Activated CD8-positive, alpha-beta T cell treated with anti-CD3 and anti-CD28 coated beads, Interleukin-2, amount 10 ng/mL, durations not matched to agents 7 days and 5 days (primary cell): ENCODE measurements at regions of chr16 and their contacts with region 1.

Region 1: DNA sequence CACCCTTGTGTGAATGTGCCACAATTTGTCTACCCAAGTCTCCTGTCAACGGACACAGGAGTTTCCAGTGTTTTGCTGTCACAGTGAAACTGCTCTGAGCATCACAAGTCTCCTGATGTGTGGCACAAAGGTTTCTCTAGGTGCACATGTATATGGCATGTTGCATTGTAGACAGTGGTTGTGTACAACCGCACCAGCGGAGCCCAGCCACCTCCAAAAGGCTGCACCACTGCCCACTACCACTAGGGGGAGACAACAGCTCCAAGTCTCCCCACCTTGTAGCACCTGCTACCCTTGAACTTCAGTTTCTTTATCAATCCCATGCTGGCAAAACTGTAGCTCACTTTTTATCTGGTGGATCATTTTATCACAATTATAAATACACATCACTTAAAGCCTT is 95.5 kb upstream of the ZNF469 start:
- DNase-seq: peak; percentile 71
- ATAC-seq: peak; percentile 61
- H3K4me3 Mint-ChIP-seq: no peak overlapping the region
- H3K27ac Mint-ChIP-seq: no peak overlapping the region
- H3K4me1 Mint-ChIP-seq: no peaks in the 10 kb centered on the region
- H3K27me3 Mint-ChIP-seq: no peaks in the 10 kb centered on the region

Region 2: DNA sequence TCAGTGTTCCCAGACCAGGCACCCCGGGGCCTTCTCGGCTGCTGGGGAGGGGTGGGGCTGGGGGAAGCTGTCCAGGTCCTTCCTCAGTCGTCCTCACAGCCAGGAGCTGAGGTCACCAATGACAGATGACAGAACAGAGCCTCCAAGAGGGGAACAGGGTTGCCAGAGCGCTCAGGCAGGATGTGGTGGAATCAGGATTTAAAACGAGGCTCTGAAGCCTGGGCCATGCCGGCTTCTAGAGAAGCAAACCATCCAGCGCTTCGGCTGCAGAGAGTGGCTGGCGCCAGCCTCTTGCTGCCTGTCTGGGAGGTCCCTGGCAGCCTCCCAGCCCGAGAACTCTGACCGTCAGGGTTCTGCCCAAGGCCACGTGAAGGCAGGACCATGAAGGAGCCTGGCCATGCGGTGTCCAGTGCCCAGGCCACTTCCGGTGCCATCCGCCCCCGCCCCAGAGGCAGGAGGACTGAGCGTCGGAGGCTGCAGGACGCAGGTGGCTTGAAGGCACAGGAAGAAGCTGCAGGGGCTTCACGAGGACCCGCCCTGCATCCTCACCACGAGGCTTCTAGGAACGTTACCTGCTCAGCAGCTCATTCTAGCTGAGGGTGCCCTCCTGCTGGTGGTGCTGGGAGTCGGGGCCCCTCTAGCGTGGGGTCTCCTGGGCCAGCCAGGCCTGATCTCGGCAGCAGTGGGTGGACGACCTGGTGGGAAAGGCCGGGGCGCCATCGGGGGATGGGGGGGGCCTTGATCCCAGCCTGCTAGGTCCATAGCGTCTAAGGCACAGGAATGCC is 599.9 kb before region 1 on chr16:
- CTCF ChIA-PET with region 1: no interaction called
- POLR2A ChIA-PET with region 1: no interaction called
- DNase-seq: peak; percentile 31
- ATAC-seq: no peak
- H3K4me3 Mint-ChIP-seq: no peak overlapping the region
- H3K27ac Mint-ChIP-seq: no peak overlapping the region
- H3K4me1 Mint-ChIP-seq: peaks cover 1% of the 10 kb centered on the region
- H3K27me3 Mint-ChIP-seq: no peaks in the 10 kb centered on the region

Region 3: DNA sequence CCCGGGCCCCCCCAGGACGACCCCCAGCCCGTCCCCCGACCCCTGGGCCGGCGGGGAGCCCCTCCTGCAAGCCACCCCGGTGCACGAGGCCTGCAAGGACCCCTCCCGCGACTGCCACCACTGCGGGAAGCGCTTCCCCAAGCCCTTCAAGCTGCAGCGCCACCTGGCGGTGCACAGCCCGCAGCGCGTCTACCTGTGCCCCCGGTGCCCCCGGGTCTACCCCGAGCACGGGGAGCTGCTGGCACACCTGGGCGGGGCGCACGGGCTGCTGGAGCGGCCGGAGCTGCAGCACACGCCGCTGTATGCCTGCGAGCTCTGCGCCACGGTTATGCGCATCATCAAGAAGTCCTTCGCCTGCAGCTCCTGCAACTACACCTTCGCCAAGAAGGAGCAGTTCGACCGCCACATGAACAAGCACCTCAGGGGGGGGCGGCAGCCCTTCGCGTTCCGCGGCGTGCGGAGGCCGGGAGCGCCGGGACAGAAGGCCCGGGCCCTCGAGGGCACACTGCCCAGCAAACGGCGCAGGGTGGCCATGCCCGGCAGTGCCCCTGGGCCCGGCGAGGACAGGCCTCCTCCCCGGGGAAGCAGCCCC is 150.2 kb after region 1 on chr16:
- CTCF ChIA-PET with region 1: interaction called, 17 read pairs
- POLR2A ChIA-PET with region 1: no interaction called
- DNase-seq: peak; percentile 75
- ATAC-seq: peak; percentile 77
- H3K4me3 Mint-ChIP-seq: no peak overlapping the region
- H3K27ac Mint-ChIP-seq: no peak overlapping the region
- H3K4me1 Mint-ChIP-seq: no peaks in the 10 kb centered on the region
- H3K27me3 Mint-ChIP-seq: no peaks in the 10 kb centered on the region

Region 4: DNA sequence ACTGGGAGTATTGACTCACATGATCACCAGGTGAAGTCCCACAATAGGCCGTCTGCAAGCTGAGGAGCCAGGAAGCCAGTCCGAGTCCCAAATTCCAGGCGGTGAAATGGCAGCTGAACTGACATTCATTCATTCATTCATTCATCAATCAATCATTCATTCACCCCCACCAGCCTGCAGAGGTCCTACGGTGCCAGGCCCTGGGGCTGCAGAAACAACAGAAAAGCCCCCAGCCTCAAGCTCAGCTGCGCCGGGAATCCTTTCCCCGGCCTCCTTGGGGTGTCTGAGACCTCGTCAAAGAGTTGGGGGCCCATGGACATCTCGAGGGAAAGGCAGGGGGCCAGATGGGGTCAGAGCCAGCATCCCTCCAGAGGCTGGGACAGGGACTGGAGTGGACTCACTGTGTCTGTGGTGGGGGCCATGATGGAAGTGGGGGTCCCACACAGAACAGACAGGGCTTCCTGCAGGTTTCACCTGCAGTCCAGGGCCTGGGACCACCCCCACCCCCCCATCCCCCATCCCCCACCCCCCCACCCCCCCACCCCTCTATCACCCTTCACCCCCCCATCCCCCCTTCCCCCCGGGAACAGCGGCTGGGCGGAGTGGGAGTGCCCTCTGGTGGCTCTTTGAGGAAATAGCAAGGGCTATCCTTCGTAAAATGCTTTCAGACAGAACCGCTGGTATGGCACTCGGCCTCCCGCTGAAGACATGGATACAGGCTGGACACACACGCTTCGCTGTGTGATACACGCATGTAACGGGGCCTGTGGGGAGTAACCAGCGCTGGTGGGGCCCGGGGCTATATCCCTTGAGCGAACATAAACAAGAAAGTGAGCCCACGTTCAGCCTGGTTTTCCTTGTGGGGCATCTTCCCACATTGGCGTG is 274.5 kb after region 1 on chr16:
- CTCF ChIA-PET with region 1: no interaction called
- POLR2A ChIA-PET with region 1: no interaction called
- DNase-seq: peak; percentile 65
- ATAC-seq: peak; percentile 53
- H3K4me3 Mint-ChIP-seq: no peak overlapping the region
- H3K27ac Mint-ChIP-seq: no peak overlapping the region
- H3K4me1 Mint-ChIP-seq: peaks cover 16% of the 10 kb centered on the region
- H3K27me3 Mint-ChIP-seq: peaks cover 3% of the 10 kb centered on the region